Ovary (tissue), 10 donors: ENCODE measurements at regions of chr7 and their contacts with region 1.

Region 1: DNA sequence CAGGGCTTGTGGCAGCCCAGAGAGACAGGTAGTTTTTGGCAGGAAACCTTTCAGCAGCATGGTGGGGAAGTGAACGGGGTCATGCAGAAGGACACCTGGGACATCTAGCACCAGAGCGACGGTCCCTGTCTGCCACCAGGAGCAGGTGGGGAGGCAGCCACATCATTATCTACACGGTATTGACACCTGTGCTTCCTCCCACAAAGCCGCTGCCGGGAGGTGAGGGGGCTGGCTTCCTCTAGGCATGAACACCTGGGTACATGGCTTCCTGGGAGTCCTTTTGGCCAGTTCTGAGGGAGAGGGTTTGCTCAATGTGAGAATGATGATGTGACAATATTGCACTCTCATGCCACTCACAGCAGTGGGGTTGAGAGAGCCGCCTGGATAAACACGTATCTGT is 275.2 kb downstream of the ACTR3B start:
- DNase-seq: no peak
- H3K4me3 ChIP-seq: no peak overlapping the region
- H3K27ac ChIP-seq: no peak overlapping the region
- H3K4me1 ChIP-seq: no peaks in the 10 kb centered on the region
- H3K27me3 ChIP-seq: no peaks in the 10 kb centered on the region
- CTCF ChIP-seq: no peak
- EP300 ChIP-seq: no peak
- POLR2A ChIP-seq: no peak

Region 2: DNA sequence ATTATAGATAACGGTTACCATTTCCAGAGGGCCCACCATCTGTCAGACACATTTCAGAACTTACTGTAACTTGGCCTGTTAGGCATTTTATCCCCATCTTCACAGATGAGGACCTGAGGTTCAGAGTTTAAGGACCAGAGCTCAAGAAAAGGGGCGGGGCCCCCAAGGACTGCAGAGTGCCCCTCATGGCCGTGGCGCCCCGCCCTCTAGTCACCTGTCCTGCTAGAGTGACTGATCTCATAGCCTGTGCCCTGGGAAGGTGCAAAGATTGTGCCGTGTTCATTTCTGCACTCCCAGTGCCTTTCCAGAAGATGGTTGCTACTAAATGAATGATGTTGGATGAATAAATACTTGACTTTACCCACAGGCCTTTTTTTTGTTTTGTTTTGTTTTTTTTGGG is 465.8 kb before region 1 on chr7:
- intact Hi-C with region 1: loop called in 1 of 4 experiments (anchors 5 kb)
- DNase-seq: no peak
- H3K4me3 ChIP-seq: no peak overlapping the region
- H3K27ac ChIP-seq: no peak overlapping the region
- H3K4me1 ChIP-seq: no peaks in the 10 kb centered on the region
- H3K27me3 ChIP-seq: no peaks in the 10 kb centered on the region
- CTCF ChIP-seq: no peak
- EP300 ChIP-seq: no peak
- POLR2A ChIP-seq: no peak

Region 3: DNA sequence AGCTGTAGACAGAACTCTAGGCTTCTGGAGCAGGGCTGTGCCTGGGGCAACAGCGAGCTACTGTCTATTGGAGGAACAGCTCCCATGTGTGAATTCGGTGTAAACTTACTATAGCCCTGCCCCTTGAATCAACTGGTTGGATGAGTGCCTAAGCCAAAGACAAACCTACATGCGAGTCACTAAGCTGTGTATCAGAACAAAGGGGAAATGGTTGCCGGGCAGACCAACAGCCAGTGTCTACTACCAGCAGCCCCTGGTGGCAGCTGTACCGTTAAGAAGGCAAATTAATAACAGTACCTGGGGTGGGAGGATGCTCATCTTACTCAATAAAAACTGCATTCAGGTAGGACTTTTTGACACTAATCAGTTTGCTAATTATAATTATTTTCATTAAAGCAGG is 68.4 kb after region 1 on chr7:
- intact Hi-C with region 1: no loop called
- DNase-seq: no peak
- H3K4me3 ChIP-seq: no peak overlapping the region
- H3K27ac ChIP-seq: no peak overlapping the region
- H3K4me1 ChIP-seq: no peaks in the 10 kb centered on the region
- H3K27me3 ChIP-seq: no peaks in the 10 kb centered on the region
- CTCF ChIP-seq: no peak
- EP300 ChIP-seq: no peak
- POLR2A ChIP-seq: no peak